H1 (cell line): ENCODE measurements at regions of chr1 and their contacts with region 1.

Region 1: DNA sequence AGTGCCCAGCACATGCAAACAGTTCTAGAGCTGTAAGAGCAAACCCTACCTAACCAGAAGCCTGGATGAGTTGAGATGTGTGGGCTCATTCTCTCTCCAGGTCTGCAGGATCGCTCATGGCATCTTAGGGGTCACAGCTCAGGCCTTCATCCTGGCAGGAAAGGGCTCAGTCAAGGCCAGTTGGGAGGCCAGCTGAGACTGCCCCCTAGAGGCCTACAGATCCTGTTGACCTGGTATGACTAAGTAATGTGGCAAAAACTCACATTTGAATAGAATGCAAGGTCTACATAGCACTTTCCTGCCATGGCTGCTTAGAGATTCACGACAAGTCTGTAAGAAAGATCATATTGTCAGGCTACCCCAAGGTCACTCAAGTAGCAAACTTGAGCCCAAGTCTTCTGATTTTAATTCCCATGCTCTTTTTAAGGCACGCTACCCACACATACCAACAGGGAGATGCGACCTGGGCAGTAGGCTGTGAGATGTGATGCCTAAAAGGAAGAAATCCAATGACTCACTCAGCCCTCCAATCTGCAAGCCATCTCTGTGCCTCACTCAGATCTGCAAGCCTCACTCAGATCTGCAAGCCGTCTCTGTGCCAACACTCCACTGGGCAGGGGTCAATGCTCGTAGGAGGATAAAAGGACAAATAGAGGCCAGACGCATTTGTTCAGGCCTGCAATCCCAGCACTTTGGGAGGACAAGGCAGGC is 5.1 kb upstream of the CAPN8 start:
- DNase-seq: peak; percentile 53 to 64
- H3K4me3 ChIP-seq: no peak overlapping the region
- H3K27ac ChIP-seq: no peak overlapping the region
- H3K4me1 ChIP-seq: no peaks in the 10 kb centered on the region; a peak in 2 of 7 replicates
- H3K27me3 ChIP-seq: no peaks in the 10 kb centered on the region
- CTCF ChIP-seq: peak; percentile 73 to 92 (median 88)
- EP300 ChIP-seq: no peak
- POLR2A ChIP-seq: no peak
- RAD21 ChIP-seq: peak; percentile 85 to 90

Region 2: GRCh38 chr1:223531742-223532341 is 138.8 kb before region 1 on chr1:
- CTCF ChIA-PET with region 1: interaction called, 26 read pairs
- POLR2A ChIA-PET with region 1: no interaction called
- DNase-seq: peak; percentile 50 to 90
- H3K4me3 ChIP-seq: no peak overlapping the region
- H3K27ac ChIP-seq: no peak overlapping the region
- H3K4me1 ChIP-seq: peaks cover 0 to 2% (median 0%) of the 10 kb centered on the region in 4 experiments; a peak in 1 of 7 replicates
- H3K27me3 ChIP-seq: no peaks in the 10 kb centered on the region
- CTCF ChIP-seq: peak; percentile 80 to 98 (median 93)
- EP300 ChIP-seq: no peak
- POLR2A ChIP-seq: no peak
- RAD21 ChIP-seq: peak; percentile 82 to 85

Region 3: GRCh38 chr1:223621312-223621734 is 49.3 kb before region 1 on chr1:
- CTCF ChIA-PET with region 1: interaction called, 17 read pairs
- POLR2A ChIA-PET with region 1: no interaction called
- DNase-seq: no peak
- H3K4me3 ChIP-seq: no peak overlapping the region
- H3K27ac ChIP-seq: no peak overlapping the region
- H3K4me1 ChIP-seq: peaks cover 0 to 6% (median 1%) of the 10 kb centered on the region in 4 experiments; a peak in 3 of 7 replicates
- H3K27me3 ChIP-seq: no peaks in the 10 kb centered on the region
- CTCF ChIP-seq: no peak
- EP300 ChIP-seq: no peak
- POLR2A ChIP-seq: no peak
- RAD21 ChIP-seq: no peak

Region 4: GRCh38 chr1:223628233-223629125 is 42.1 kb before region 1 on chr1:
- CTCF ChIA-PET with region 1: interaction called, 17 read pairs
- POLR2A ChIA-PET with region 1: no interaction called
- DNase-seq: peak; percentile 10 to 76
- H3K4me3 ChIP-seq: no peak overlapping the region
- H3K27ac ChIP-seq: no peak overlapping the region
- H3K4me1 ChIP-seq: 0 out of 7 replicates have a peak, but pooled peaks cover 0 to 4% (median 0%) of the 10 kb centered on the region in 4 experiments
- H3K27me3 ChIP-seq: no peaks in the 10 kb centered on the region
- CTCF ChIP-seq: peak; percentile 71 to 91 (median 87)
- EP300 ChIP-seq: no peak
- POLR2A ChIP-seq: no peak
- RAD21 ChIP-seq: peak; percentile 51 to 62

Region 5: GRCh38 chr1:223645903-223646302 is 24.7 kb before region 1 on chr1:
- CTCF ChIA-PET with region 1: interaction called, 12 read pairs
- POLR2A ChIA-PET with region 1: no interaction called
- DNase-seq: no peak
- H3K4me3 ChIP-seq: no peak overlapping the region
- H3K27ac ChIP-seq: no peak overlapping the region
- H3K4me1 ChIP-seq: peaks cover 8 to 18% (median 10%) of the 10 kb centered on the region in 4 experiments; a peak in 6 of 7 replicates
- H3K27me3 ChIP-seq: no peaks in the 10 kb centered on the region
- CTCF ChIP-seq: no peak
- EP300 ChIP-seq: no peak
- POLR2A ChIP-seq: no peak
- RAD21 ChIP-seq: no peak

Region 6: GRCh38 chr1:223652436-223652941 is 18.1 kb before region 1 on chr1:
- CTCF ChIA-PET with region 1: interaction called, 12 read pairs
- POLR2A ChIA-PET with region 1: no interaction called
- DNase-seq: peak in 1 of 2 experiments; percentile 50
- H3K4me3 ChIP-seq: no peak overlapping the region
- H3K27ac ChIP-seq: no peak overlapping the region
- H3K4me1 ChIP-seq: peaks cover 0 to 13% (median 7%) of the 10 kb centered on the region in 4 experiments; a peak in 6 of 7 replicates
- H3K27me3 ChIP-seq: peaks cover 0 to 2% (median 0%) of the 10 kb centered on the region in 4 experiments; a peak in 1 of 7 replicates
- CTCF ChIP-seq: no peak
- EP300 ChIP-seq: no peak
- POLR2A ChIP-seq: no peak
- RAD21 ChIP-seq: no peak